ENCODE measurements at regions of chr17 and their contacts with region 1.

Region 1: DNA sequence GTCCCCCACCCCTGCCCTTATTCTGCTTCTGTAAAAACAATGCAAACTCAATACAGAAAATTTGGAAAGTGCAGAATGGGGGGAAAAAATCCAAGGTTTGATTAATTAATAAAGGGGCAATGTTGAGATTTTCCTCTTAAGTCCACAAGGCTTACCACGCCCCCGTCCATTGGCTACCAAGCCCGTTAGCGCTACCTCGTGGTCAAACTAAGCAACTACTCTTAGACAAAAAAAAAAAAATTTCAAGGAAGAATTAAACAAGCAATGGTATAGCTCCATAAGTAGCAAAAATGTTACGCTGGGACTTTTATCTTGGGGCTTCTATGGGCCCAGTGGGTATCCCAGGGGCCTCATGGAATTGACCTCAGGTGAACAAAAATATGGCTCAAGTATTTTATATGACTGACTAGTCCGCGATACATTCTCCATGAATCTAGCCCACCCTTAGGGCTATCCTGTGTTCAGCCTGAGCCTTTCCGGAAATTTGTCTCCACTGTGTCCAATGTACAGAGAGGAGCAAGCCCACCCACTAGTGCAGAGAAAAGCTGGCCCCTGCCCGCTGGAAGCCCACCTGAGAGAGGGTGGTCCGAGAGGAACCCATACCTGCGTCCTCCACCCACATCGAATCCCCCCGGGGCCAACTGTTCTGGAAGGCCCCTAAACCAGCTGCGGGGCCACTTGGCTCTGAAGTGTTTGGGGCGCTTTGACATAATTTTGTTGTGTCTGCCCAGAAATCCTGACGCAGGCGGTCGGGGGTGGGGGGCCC is 19.1 kb upstream of the TEX2 start:
- DNase-seq: peak; percentile 50
- H3K4me3 ChIP-seq: no peak overlapping the region
- H3K27ac ChIP-seq: no peak overlapping the region
- H3K4me1 ChIP-seq: peaks cover 15% of the 10 kb centered on the region
- H3K27me3 ChIP-seq: no peaks in the 10 kb centered on the region
- CTCF ChIP-seq: peak; percentile 79 to 81

Region 2: DNA sequence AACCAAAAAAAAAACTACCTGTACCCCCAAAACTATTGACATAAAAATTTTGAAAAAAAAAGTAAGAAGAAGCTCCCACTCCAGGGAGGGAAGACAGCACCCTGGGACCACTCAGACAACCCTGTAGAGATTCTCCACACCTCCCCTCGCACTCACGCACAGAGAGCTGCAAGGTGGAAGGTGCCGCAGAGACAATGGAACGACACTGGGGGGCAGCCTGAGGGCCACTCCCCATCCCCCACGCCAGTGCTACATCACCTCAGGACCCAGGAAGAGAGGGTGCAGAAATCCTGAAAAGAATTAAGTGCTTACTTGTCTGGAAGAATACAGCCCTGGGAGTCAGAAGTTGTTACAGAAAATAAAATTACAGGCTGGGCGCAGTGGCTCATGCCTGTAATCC is 344.8 kb before region 1 on chr17:
- CTCF ChIA-PET with region 1: interaction called, 14 read pairs
- dilution Hi-C with region 1: no loop called
- in situ Hi-C with region 1: no loop called
- intact Hi-C with region 1: no loop called
- DNase-seq: no peak
- H3K4me3 ChIP-seq: no peak overlapping the region
- H3K27ac ChIP-seq: no peak overlapping the region
- H3K4me1 ChIP-seq: no peaks in the 10 kb centered on the region
- H3K27me3 ChIP-seq: no peaks in the 10 kb centered on the region
- CTCF ChIP-seq: no peak

Region 3: DNA sequence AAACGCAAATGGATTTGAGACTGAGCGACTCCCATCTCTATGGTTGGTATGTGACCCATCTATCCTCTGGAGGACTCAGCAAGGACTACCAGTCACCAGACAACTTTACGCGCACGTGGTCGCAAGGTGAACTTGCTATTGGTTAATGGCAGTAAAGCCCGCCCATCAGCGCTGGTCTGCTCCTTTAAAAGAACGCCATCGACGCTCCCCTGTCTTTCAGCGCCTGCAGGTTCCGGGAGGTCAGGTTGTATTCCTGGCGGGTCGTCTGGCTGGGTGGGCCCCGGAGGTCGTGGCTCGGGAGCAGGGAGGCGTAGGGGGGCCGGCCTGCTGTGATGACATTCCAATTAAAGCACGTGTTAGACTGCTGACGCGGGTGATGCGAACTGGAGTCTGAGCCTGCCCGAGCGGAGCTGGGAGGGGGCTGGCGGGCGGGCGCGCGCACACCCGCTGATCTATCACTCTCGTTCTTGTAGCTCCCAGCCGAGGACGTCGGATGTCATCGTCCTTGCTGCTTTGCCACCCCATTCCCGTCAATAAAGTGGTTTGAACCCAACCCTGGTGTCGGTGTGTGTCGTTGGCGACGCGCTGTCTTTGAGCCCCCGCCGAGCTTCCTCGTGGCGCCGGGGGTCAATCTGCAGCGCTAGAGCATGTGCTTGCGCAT is 136.3 kb before region 1 on chr17:
- CTCF ChIA-PET with region 1: interaction called, 26 read pairs
- dilution Hi-C with region 1: loop called (anchors 5 kb)
- in situ Hi-C with region 1: loop called (anchors 10 to 25 kb)
- intact Hi-C with region 1: loop called (anchors 1 kb)
- DNase-seq: peak; percentile 98
- H3K4me3 ChIP-seq: peak overlapping the region; percentile 76 to 89 (median 79)
- H3K27ac ChIP-seq: peak overlapping the region; percentile 76
- H3K4me1 ChIP-seq: peaks cover 8% of the 10 kb centered on the region
- H3K27me3 ChIP-seq: no peaks in the 10 kb centered on the region
- CTCF ChIP-seq: no peak

Region 4: DNA sequence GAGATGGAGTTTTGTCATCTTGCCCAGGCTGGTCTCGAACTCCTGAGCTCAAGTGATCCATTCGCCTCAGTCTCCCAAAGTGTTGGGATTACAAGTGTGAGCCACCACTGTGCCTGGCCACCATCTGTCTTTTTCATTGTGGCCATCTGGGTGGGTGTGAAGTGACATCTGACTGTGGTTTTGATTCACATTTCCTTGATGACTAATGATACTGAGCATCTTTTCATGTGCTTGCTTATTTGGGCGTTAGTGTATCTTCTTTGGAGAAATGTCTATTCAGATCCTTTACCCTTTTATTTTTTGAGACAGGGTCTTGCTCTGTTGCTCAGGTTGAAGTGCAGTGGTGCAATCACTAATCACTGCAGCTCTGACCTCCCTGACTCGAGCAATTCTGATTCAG is 98.3 kb before region 1 on chr17:
- CTCF ChIA-PET with region 1: interaction called, 3 read pairs
- dilution Hi-C with region 1: no loop called
- in situ Hi-C with region 1: no loop called
- intact Hi-C with region 1: loop called (anchors 5 kb)
- DNase-seq: peak; percentile 41
- H3K4me3 ChIP-seq: no peak overlapping the region
- H3K27ac ChIP-seq: no peak overlapping the region
- H3K4me1 ChIP-seq: peaks cover 3% of the 10 kb centered on the region
- H3K27me3 ChIP-seq: no peaks in the 10 kb centered on the region
- CTCF ChIP-seq: no peak

Region 5: GRCh38 chr17:64262417-64263260 is 19.5 kb before region 1 on chr17 and contains the start of gene TEX2:
- CTCF ChIA-PET with region 1: no interaction called
- dilution Hi-C with region 1: no loop called
- in situ Hi-C with region 1: no loop called
- intact Hi-C with region 1: loop called (anchors 2 kb)
- DNase-seq: peak; percentile 25
- H3K4me3 ChIP-seq: peak within 1 kb of the TSS; percentile 53 to 94 (median 85)
- H3K27ac ChIP-seq: peak within 1 kb of the TSS; percentile 72
- H3K4me1 ChIP-seq: peaks cover 46% of the 10 kb centered on the region
- H3K27me3 ChIP-seq: no peaks in the 10 kb centered on the region
- CTCF ChIP-seq: no peak
- total RNA-seq, gene TEX2: 72.6 to 127 TPM

Region 6: GRCh38 chr17:64378890-64379354 is 96.8 kb after region 1 on chr17:
- CTCF ChIA-PET with region 1: no interaction called
- dilution Hi-C with region 1: no loop called
- in situ Hi-C with region 1: no loop called
- intact Hi-C with region 1: no loop called
- DNase-seq: no peak
- H3K4me3 ChIP-seq: no peak overlapping the region
- H3K27ac ChIP-seq: no peak overlapping the region
- H3K4me1 ChIP-seq: no peaks in the 10 kb centered on the region
- H3K27me3 ChIP-seq: no peaks in the 10 kb centered on the region
- CTCF ChIP-seq: no peak

Measured in mammary epithelial cell (primary cell).